K562 (cell line): ENCODE measurements at regions of chr3 and their contacts with region 1.

Region 1: GRCh38 chr3:56702490-56703315 is 19.6 kb upstream of the TASOR start:
- DNase-seq: peak; percentile 7 to 61 (median 13)
- ATAC-seq: peak; percentile 61
- H3K4me3 ChIP-seq: no peak overlapping the region
- H3K27ac ChIP-seq: no peak overlapping the region
- H3K4me1 ChIP-seq: no peaks in the 10 kb centered on the region
- H3K27me3 ChIP-seq: no peaks in the 10 kb centered on the region
- CTCF ChIP-seq: peak; percentile 49 to 88 (median 52); a peak in 5 of 6 replicates
- EP300 ChIP-seq: no peak
- POLR2A ChIP-seq: no peak
- RAD21 ChIP-seq: peak; percentile 79 to 87

Region 2: GRCh38 chr3:56801662-56802377 is 99.1 kb after region 1 on chr3 and contains the start of gene ARHGEF3:
- CTCF ChIA-PET with region 1: interaction called, 16 read pairs
- POLR2A ChIA-PET with region 1: no interaction called
- in situ Hi-C with region 1: no loop called
- intact Hi-C with region 1: loop called (anchors 1 kb)
- DNase-seq: peak; percentile 75 to 91 (median 86)
- ATAC-seq: peak; percentile 99
- H3K4me3 ChIP-seq: peak within 1 kb of the TSS; percentile 46
- H3K27ac ChIP-seq: no peak within 1 kb of the TSS
- H3K4me1 ChIP-seq: peaks cover 0 to 10% of the 10 kb centered on the region in 2 experiments; a peak in 3 of 5 replicates
- H3K27me3 ChIP-seq: peaks cover 0 to 7% of the 10 kb centered on the region in 2 experiments; a peak in 2 of 5 replicates
- CTCF ChIP-seq: peak; percentile 47 to 51 (median 49)
- EP300 ChIP-seq: no peak
- POLR2A ChIP-seq: no peak
- RAD21 ChIP-seq: peak in 1 of 2 experiments; percentile 28; a peak in 1 of 4 replicates
- polyA plus RNA-seq, gene ARHGEF3: 0.94 to 1.3 TPM

Region 3: GRCh38 chr3:56988458-56989168 is 285.9 kb after region 1 on chr3:
- CTCF ChIA-PET with region 1: interaction called, 26 read pairs
- POLR2A ChIA-PET with region 1: interaction called, 4 read pairs
- in situ Hi-C with region 1: loop called (anchors 5 kb)
- intact Hi-C with region 1: loop called (anchors 1 kb)
- DNase-seq: peak; percentile 40 to 75 (median 62)
- ATAC-seq: peak; percentile 91
- H3K4me3 ChIP-seq: no peak overlapping the region
- H3K27ac ChIP-seq: no peak overlapping the region
- H3K4me1 ChIP-seq: no peaks in the 10 kb centered on the region
- H3K27me3 ChIP-seq: peaks cover 0 to 14% of the 10 kb centered on the region in 2 experiments; a peak in 2 of 5 replicates
- CTCF ChIP-seq: peak; percentile 61 to 77 (median 67)
- EP300 ChIP-seq: no peak
- POLR2A ChIP-seq: no peak
- RAD21 ChIP-seq: peak; percentile 79 to 83